MCF 10A (cell line): ENCODE measurements at regions of chr15 and their contacts with region 1.

Region 1: DNA sequence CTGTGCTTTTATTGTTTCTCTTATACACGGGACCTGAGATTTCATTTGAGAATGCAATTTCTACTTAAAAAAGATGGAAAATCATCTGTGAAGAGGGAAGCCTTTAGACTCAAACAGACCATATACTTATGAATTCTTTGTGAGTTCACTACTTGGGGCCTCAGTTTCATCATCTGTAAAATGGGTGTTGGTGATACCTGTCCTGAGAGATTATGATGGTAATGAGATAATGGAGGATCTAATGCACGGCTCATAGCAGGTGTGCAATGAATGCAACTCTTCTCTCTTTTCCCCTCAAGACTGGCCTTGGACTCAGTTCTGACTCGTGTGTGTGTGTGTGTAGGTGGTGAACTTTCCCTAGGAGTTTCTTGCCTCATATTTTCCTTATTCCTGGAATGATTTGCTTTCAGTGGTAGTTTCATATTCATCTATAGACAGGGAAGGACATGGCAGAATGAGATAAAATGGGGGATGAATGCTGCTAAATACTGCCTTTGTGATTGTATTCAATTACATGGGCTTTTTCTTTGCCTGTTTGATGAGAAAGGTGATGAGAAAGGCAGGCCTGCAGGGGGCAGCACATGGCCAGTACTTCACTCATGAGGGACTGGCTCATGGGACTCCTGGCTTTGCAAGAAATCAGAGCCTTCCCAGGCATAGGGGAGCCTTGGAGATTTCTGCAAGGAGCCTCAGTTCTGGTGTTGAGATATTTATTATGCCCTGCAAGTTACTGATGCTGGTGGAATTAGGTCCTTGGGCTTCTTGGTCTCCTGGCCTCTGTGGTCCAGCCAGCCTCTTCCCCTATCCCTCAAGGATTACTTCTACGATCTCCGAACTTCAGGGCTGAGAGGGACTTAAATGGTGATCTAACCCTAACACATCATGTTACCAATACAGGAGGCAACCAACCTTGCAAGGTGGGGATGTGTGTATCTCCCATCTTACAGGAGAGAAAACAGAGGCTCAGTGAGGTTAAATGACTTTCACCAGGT is 70.7 kb downstream of the RPLP1 start:
- DNase-seq: peak; percentile 76
- H3K4me3 Mint-ChIP-seq: no peak overlapping the region
- H3K27ac Mint-ChIP-seq: no peak overlapping the region
- H3K4me1 Mint-ChIP-seq: no peaks in the 10 kb centered on the region
- H3K27me3 Mint-ChIP-seq: peaks cover 11% of the 10 kb centered on the region
- CTCF ChIP-seq: peak; percentile 75

Region 2: DNA sequence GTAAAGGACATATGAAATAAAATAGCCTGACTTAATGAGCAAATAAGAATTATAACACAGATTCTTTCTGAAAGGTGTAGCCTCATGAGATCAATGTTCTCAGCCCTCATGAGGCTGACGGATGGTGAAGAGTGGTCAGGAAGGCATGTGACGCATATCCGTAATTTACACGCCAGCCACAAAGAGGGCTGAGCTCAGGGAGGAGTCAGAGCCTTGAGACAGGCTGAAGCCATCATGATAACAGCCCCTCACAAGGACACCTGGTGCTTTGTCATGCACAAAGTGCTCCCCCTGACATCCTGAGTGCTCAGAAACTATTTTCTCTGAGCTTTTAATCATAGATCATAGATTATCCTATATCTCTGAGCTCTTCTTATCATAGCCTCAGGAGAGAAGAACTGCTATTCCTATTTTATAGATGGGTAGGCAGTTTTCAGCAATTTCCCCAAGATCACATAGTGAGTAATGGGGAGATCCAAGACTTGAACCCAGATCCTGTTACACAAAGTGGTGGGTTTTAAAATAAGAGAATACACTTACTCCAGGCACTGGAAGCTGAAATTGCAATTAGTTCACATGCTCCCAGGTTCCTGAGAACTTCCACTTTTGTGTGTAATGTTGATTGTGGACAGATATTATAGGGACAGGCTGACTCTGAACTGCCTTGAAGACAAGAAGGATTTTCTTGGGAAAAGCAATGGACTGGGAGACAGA is 196.4 kb after region 1 on chr15:
- CTCF ChIA-PET with region 1: no interaction called
- POLR2A ChIA-PET with region 1: no interaction called
- intact Hi-C with region 1: loop called (anchors 5 kb)
- DNase-seq: no peak
- H3K4me3 Mint-ChIP-seq: no peak overlapping the region
- H3K27ac Mint-ChIP-seq: no peak overlapping the region
- H3K4me1 Mint-ChIP-seq: peaks cover 11% of the 10 kb centered on the region
- H3K27me3 Mint-ChIP-seq: peaks cover 34% of the 10 kb centered on the region
- CTCF ChIP-seq: no peak